ENCODE measurements at regions of chrX and their contacts with region 1.

Region 1: GRCh38 chrX:12974796-12975669 is at the start of gene TMSB4X:
- DNase-seq: peak; percentile 73
- H3K4me3 ChIP-seq: peak within 1 kb of the TSS; percentile 96 to 97 (median 96)
- H3K27ac ChIP-seq: peak within 1 kb of the TSS; percentile 88
- H3K4me1 ChIP-seq: peaks cover 44% of the 10 kb centered on the region
- H3K27me3 ChIP-seq: no peaks in the 10 kb centered on the region
- CTCF ChIP-seq: no peak
- POLR2A ChIP-seq: peak; percentile 99
- total RNA-seq, gene TMSB4X: 6,742 and 6,858 TPM in 2 replicates

Region 2: GRCh38 chrX:12890467-12890866 is 84.6 kb before region 1 on chrX:
- CTCF ChIA-PET with region 1: no interaction called
- POLR2A ChIA-PET with region 1: no interaction called
- dilution Hi-C with region 1: no loop called
- intact Hi-C with region 1: no loop called
- DNase-seq: no peak
- H3K4me3 ChIP-seq: no peak overlapping the region
- H3K27ac ChIP-seq: no peak overlapping the region
- H3K4me1 ChIP-seq: no peaks in the 10 kb centered on the region
- H3K27me3 ChIP-seq: no peaks in the 10 kb centered on the region
- CTCF ChIP-seq: no peak
- POLR2A ChIP-seq: no peak

Region 3: DNA sequence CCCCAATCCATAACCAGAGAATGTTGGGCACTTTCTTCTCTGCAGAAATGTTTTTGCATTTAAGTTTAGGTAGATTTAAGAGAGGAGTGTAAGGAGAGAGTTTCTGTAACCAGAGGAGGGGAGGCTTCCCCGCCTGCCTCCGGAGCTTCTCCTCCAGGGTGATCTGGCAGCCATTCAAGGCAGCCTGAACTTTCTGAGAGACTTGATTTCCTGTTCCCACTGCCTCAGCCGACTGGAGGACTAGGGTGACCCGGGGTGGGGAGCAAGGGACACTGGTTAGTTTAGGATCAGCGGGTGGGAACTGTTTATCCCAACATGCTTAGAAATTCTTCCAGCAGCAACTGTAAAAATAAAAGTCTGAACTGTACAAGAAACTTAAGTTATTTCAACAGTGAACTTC is 54.3 kb after region 1 on chrX:
- CTCF ChIA-PET with region 1: no interaction called
- POLR2A ChIA-PET with region 1: no interaction called
- dilution Hi-C with region 1: no loop called
- intact Hi-C with region 1: loop called (anchors 2 kb)
- DNase-seq: no peak
- H3K4me3 ChIP-seq: no peak overlapping the region
- H3K27ac ChIP-seq: peak overlapping the region; percentile 92
- H3K4me1 ChIP-seq: peaks cover 20% of the 10 kb centered on the region
- H3K27me3 ChIP-seq: no peaks in the 10 kb centered on the region
- CTCF ChIP-seq: no peak
- POLR2A ChIP-seq: no peak

Region 4: DNA sequence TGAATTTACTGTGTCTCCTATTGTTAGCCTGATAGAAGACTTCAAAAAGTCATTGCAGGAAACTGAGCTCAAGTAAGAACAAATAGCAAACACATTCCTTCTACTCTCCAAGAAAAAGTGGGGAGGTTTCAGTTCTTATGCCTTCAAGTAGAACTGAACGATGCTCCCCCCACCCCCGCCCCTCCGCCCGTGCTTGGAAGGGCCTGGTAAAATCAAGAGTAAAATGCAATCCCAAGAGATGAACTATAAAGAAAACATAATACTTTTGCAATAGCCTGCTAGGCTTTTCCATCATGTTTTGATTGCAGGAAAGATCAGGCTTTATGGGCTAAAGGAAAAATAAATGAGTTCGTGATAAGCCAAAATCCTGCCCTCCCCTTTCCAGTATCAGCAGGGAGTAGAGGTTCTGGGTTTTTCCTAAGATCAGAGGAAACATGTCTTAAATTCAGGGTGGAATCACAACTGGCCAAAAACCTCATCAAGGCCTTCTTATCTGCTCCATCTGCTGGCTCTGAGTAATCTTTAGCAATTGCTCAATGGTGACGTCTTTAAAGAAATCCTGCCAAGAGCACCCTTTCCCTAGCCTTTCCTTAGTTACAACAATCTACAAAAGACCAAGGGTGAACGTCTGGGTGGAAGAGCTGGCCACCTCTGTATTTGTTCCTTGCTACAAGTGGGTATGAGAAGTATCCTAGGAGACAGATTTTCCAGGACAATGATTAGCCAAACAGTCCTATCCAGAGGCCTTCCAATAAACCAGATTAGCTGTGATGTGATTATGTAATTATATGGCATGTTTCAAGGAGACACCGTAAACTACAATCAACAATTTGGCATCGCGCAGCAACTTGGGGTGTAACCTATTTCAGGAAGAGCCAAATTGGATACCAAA is 135.6 kb after region 1 on chrX:
- CTCF ChIA-PET with region 1: no interaction called
- POLR2A ChIA-PET with region 1: no interaction called
- dilution Hi-C with region 1: no loop called
- intact Hi-C with region 1: loop called (anchors 1 kb)
- DNase-seq: peak; percentile 89
- H3K4me3 ChIP-seq: no peak overlapping the region
- H3K27ac ChIP-seq: peak overlapping the region; percentile 64
- H3K4me1 ChIP-seq: peaks cover 14% of the 10 kb centered on the region
- H3K27me3 ChIP-seq: no peaks in the 10 kb centered on the region
- CTCF ChIP-seq: no peak
- POLR2A ChIP-seq: no peak

Region 5: DNA sequence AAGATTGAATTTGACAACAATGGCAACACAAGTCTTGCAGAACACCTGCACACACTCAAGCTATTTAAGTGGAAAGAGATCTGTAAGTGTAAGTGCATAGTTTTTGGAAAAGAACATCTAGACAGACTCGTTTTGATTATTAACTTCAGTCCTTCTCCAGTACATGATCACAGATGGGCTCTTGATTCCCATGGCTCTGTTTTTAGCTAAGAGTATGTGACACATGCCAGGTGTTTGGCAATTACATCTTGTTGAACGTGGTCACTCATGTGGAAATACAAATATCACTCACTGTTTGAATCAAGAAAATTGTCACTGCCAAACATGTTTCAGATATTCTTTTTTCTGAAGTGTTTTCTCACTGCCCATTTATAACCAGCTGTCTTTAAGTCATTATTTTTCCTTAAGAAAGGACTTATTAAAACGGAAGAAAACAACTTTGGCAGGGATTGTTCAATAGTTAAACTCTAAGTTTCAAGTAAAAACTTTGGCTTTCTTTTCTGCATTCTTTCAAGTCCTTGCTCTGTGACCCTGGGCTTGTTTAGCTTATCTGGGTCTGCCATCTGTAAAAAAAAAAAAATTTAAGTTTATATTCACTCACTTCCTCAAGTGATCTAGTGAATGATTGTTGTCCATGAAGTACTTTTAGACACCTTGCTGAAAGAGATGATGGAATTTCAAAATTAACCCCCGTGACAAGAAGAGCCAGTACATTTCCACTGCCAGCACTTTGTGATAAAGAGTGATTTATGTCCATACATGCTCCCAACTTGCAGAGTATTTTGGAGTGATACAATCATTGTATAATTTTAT is 219.5 kb after region 1 on chrX:
- CTCF ChIA-PET with region 1: interaction called, 3 read pairs
- POLR2A ChIA-PET with region 1: interaction called, 10 read pairs
- dilution Hi-C with region 1: no loop called
- intact Hi-C with region 1: no loop called
- DNase-seq: peak; percentile 63
- H3K4me3 ChIP-seq: no peak overlapping the region
- H3K27ac ChIP-seq: peak overlapping the region; percentile 22
- H3K4me1 ChIP-seq: peaks cover 2% of the 10 kb centered on the region
- H3K27me3 ChIP-seq: no peaks in the 10 kb centered on the region
- CTCF ChIP-seq: no peak
- POLR2A ChIP-seq: no peak

Region 6: DNA sequence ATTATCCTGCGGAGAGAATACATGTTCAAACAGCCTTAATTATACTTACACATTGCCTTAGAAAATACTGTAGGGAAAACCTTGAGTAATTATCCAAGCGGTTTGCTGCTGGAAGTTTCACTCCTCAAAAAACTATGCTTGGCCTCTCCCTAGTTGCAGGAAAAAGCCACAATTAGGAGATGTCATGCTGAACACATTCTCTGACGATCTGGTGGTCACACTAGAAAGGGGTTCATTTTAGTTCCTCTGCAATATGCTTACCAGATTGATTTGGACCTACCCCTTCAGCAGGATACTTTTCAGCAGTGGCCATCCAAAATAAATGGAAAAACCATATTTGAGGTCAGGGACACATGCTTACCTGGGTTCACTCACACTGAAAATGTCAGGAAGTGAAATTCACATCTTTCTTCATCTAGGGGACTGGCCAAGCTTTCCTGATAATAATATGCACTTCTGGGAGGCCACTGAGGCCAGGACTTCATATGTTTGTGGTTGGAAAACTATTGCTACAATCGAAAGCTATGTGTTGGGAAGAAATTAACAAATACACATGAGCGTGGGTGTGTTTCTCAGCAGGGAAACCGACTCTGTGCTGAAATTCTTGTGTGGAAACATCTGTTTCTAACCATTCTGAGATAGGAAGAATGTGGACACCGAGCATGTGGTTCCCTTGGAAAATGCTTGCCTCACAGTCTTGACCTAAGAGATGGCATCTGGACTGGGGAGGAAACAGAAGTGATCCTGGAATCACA is 276.0 kb after region 1 on chrX:
- CTCF ChIA-PET with region 1: no interaction called
- POLR2A ChIA-PET with region 1: no interaction called
- dilution Hi-C with region 1: no loop called
- intact Hi-C with region 1: loop called (anchors 1 kb)
- DNase-seq: peak; percentile 89
- H3K4me3 ChIP-seq: no peak overlapping the region
- H3K27ac ChIP-seq: peak overlapping the region; percentile 69
- H3K4me1 ChIP-seq: peaks cover 9% of the 10 kb centered on the region
- H3K27me3 ChIP-seq: no peaks in the 10 kb centered on the region
- CTCF ChIP-seq: no peak
- POLR2A ChIP-seq: no peak

Region 7: DNA sequence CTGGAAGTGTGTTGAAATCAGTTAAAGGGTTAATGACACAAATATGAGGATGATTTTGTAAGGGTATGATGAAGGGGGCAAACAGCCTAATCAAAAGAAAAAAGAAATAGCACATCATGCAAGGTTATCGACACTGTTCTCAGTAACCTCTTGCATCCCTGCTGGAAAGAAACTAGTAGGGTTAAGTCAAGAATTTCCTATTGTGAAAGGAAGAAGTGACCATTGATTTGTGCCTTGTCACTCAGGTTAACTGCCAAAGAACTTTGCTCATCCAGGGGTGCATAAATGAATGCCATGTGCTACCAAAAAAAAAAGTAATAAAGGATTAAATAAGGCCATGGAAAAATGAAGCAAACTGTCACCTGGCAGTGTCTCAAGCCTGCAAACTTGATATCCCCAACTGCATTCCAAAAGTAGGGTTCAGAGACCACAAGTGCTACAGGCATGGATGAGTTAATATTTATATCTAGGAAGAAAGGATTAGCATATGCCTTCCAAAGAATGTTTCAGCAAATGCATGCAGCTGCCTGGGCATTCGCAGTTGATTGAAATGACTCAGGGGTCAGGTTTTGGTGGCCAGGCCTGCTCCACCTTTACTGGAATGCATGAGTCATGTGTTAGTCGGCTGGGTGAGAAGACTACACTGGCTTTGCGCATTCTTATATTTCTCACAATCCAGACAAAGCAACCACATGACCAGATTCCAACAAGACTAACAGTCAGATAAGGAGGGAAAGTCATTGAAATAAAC is 423.2 kb after region 1 on chrX:
- CTCF ChIA-PET with region 1: no interaction called
- POLR2A ChIA-PET with region 1: interaction called, 6 read pairs
- dilution Hi-C with region 1: no loop called
- intact Hi-C with region 1: loop called (anchors 1 kb)
- DNase-seq: peak; percentile 95
- H3K4me3 ChIP-seq: no peak overlapping the region
- H3K27ac ChIP-seq: peak overlapping the region; percentile 93
- H3K4me1 ChIP-seq: peaks cover 31% of the 10 kb centered on the region
- H3K27me3 ChIP-seq: no peaks in the 10 kb centered on the region
- CTCF ChIP-seq: no peak
- POLR2A ChIP-seq: peak; percentile 37

Region 8: DNA sequence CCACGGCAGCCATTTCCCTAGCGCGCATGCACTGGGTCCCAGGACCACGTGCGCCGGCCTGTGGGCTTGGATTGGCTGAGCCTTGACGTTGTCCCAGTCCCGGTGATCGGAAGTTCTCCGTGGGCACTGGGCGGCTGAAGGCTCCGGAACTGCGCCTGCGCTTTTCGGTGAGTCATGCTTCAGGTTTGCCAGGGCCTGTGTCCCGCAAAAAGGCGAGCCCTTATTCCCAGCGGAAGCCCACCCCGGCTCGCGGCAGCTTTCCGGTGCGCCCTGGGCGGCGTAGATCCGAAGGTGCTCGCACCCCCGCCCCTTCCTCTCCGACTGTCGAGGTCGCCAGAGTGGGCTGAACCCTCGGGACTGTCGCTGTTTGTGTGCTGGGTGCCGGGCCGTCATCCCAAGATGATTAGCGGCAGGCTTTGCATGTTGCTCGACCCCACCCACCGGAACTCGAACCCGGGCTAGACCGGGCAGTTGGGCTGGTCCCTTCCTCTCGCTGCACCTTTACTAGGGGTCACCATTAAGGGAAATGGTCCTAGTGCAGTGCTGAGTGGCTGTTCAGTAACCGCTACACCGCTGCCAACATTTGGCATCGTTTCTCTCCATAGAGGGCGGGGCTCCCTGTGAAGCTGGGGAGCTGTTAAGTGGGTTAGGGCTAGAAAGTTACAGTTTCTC is 678.1 kb after region 1 on chrX and contains the start of gene TCEANC:
- CTCF ChIA-PET with region 1: no interaction called
- POLR2A ChIA-PET with region 1: no interaction called
- dilution Hi-C with region 1: no loop called
- intact Hi-C with region 1: loop called (anchors 2 kb)
- DNase-seq: peak; percentile 95
- H3K4me3 ChIP-seq: peak within 1 kb of the TSS; percentile 33 to 89 (median 87)
- H3K27ac ChIP-seq: peak within 1 kb of the TSS; percentile 63
- H3K4me1 ChIP-seq: peaks cover 6% of the 10 kb centered on the region
- H3K27me3 ChIP-seq: no peaks in the 10 kb centered on the region
- CTCF ChIP-seq: no peak
- POLR2A ChIP-seq: peak; percentile 59
- total RNA-seq, gene TCEANC: 0.75 and 1.8 TPM in 2 replicates

Measured in endothelial cell of umbilical vein (primary cell).